HEK293 (cell line): ENCODE measurements at regions of chr17 and their contacts with region 1.

Region 1: GRCh38 chr17:75779231-75779986 is 5.2 kb upstream of the UNK start:
- H3K4me3 ChIP-seq: peak overlapping the region; percentile 72
- H3K27ac ChIP-seq: peak overlapping the region; percentile 94
- H3K4me1 ChIP-seq: peaks cover 17% of the 10 kb centered on the region; the same call in 1 of the 2 replicates
- CTCF ChIP-seq: no peak

Region 2: DNA sequence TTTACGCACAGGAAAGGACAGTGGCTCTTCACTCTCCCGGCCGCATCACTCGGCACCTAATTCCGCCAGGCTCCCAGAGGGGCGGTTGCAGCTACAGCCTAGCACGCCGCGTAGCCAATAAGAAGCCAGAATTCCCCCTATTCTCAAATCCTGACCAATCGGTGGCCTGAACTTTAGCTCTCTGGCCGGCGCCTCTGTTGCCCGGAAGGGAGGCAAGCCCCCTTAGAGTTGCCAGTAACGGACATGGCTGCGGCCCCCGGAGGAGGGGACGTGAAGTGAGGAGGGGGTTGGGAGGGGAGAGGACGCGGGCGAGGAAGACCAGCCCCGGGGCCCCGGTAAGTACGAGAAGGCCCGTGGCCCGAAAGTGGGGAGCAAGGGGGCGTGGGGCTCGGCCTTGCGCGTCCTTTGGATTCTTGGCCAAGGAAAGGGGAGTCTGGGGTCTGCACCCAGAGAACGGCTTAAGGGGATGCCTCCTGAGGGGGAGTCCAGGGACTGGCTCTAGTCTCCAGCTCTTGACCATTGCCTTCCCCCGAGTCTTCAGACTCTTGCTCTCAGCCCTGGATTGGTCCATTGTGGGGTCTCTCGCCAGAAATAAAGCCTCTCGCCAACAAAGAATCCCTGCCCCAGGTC is 322.9 kb before region 1 on chr17 and contains the start of gene TMEM94:
- CTCF ChIA-PET with region 1: no interaction called
- POLR2A ChIA-PET with region 1: interaction called, 11 read pairs
- H3K4me3 ChIP-seq: peak within 1 kb of the TSS; percentile 64
- H3K27ac ChIP-seq: peak within 1 kb of the TSS; percentile 84
- H3K4me1 ChIP-seq: peaks cover 20% of the 10 kb centered on the region
- CTCF ChIP-seq: no peak

Region 3: GRCh38 chr17:75793460-75793859 is 14.1 kb after region 1 on chr17:
- CTCF ChIA-PET with region 1: interaction called, 8 read pairs
- POLR2A ChIA-PET with region 1: interaction called, 54 read pairs
- H3K4me3 ChIP-seq: no peak overlapping the region
- H3K27ac ChIP-seq: no peak overlapping the region
- H3K4me1 ChIP-seq: peaks cover 3% of the 10 kb centered on the region; the same call in 1 of the 2 replicates
- CTCF ChIP-seq: no peak

Region 4: DNA sequence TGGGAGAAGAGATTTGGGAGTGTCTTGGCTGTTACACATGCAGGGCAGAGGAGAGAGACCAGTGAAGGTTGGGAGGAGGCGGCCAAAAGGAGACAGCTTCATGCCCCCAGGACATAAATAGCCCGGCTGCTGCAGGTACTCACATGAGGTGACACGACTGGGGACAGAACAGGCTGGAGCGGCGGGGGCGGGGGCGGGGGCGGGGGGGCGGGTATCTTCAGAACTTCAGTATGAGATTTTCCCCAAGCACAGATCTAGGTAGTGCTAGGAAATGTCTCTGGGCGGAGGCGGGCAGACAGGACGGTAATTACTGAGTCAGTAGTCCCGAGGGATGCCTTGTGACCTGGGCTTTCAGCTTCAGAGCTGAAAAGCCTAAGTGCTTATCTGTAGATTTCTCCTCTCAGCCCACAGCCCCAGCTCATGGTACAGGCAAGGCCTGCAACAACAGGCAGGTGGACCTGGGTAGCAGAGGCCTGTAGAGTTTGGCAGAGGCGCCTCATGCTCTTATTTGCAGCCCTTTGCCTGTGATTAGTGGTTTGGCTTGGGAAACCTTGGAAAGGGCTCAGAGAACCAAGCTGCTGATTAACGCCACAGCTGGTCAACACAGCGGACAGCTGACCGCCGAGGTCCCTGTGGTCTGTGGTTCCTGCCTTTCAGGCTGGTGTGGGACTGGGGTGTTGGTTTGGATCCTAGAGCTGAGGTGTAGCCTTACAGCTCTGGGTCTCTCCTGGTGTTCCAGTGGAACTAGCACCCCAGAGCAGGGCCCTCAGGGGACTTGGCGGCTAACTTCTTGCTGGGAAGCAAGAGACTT is 29.7 kb after region 1 on chr17:
- CTCF ChIA-PET with region 1: interaction called, 4 read pairs
- POLR2A ChIA-PET with region 1: interaction called, 19 read pairs
- H3K4me3 ChIP-seq: no peak overlapping the region
- H3K27ac ChIP-seq: peak overlapping the region; percentile 74
- H3K4me1 ChIP-seq: peaks cover 9% of the 10 kb centered on the region
- CTCF ChIP-seq: no peak

Region 5: GRCh38 chr17:75827252-75828115 is 48.1 kb after region 1 on chr17:
- CTCF ChIA-PET with region 1: interaction called, 11 read pairs
- POLR2A ChIA-PET with region 1: interaction called, 23 read pairs
- H3K4me3 ChIP-seq: no peak overlapping the region
- H3K27ac ChIP-seq: peak overlapping the region; percentile 55
- H3K4me1 ChIP-seq: no peaks in the 10 kb centered on the region
- CTCF ChIP-seq: peak; percentile 88

Region 6: GRCh38 chr17:75855310-75856081 is 76.1 kb after region 1 on chr17 and contains the start of gene WBP2:
- CTCF ChIA-PET with region 1: interaction called, 5 read pairs
- POLR2A ChIA-PET with region 1: interaction called, 33 read pairs
- H3K4me3 ChIP-seq: peak within 1 kb of the TSS; percentile 74
- H3K27ac ChIP-seq: peak within 1 kb of the TSS; percentile 88
- H3K4me1 ChIP-seq: peaks cover 8% of the 10 kb centered on the region
- CTCF ChIP-seq: peak; percentile 96

Region 7: GRCh38 chr17:75896415-75897159 is 117.2 kb after region 1 on chr17 and contains the start of gene TRIM65:
- CTCF ChIA-PET with region 1: interaction called, 3 read pairs
- POLR2A ChIA-PET with region 1: interaction called, 18 read pairs
- H3K4me3 ChIP-seq: peak within 1 kb of the TSS; percentile 86
- H3K27ac ChIP-seq: peak within 1 kb of the TSS; percentile 98
- H3K4me1 ChIP-seq: peaks cover 10% of the 10 kb centered on the region
- CTCF ChIP-seq: no peak